A549 (cell line): ENCODE measurements at regions of chr15 and their contacts with region 1.

Region 1: DNA sequence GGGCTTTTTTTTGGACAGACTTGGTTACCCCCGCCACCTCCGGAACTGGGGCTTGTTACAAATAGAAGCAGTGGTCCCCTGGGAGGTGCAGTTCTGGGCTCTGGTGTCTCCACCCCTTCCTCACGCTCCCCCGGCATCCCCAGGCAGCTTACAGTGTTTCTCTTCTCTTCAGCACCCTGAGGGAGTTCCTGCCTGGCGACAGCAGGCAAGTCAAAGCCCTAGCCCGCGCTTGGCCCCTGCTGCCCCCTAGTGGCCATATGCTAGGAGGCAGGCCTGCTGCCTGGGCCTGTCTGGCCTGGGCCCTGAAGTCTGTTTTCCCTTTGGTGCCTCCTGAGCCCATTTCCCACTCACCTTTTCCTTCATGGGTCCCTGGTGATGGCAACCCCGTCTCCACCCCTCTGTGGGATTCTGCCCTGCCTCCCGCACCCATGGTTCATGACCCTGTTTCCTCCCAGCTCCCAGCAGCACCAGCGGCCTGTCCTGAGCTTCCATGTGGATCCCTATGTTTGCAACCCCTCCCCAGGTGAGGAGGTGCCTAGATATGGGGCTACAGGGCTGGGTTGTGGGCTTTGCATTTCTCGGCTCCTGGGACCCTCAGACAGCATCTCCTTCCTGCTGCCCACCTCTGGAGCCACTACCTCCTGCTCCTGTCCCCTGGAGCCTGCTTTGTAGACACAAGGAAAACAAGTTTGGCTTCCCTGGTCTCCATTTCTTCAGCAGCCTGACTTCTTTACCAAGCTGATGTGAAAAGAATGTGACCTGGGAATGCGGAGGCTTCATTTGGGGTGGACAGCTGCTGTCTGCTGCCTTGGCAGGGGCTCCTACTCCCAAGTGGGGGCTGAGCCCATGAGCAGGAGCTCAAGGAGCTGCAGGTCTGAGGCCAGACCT is 2.2 kb downstream of the SNX22 start:
- DNase-seq: peak; percentile 90 to 98
- ATAC-seq: peak; percentile 65 to 88
- H3K4me3 ChIP-seq: no peak overlapping the region
- H3K27ac ChIP-seq: peak overlapping the region in 1 of 2 experiments; percentile 63; a peak in 3 of 6 replicates
- H3K4me1 ChIP-seq: peaks cover 9% of the 10 kb centered on the region; the same call in 1 of the 3 replicates
- CTCF ChIP-seq: peak; percentile 97
- EP300 ChIP-seq: no peak
- POLR2A ChIP-seq: peak; percentile 38; the same call in 1 of the 2 replicates
- RAD21 ChIP-seq: peak; percentile 81 to 87

Region 2: DNA sequence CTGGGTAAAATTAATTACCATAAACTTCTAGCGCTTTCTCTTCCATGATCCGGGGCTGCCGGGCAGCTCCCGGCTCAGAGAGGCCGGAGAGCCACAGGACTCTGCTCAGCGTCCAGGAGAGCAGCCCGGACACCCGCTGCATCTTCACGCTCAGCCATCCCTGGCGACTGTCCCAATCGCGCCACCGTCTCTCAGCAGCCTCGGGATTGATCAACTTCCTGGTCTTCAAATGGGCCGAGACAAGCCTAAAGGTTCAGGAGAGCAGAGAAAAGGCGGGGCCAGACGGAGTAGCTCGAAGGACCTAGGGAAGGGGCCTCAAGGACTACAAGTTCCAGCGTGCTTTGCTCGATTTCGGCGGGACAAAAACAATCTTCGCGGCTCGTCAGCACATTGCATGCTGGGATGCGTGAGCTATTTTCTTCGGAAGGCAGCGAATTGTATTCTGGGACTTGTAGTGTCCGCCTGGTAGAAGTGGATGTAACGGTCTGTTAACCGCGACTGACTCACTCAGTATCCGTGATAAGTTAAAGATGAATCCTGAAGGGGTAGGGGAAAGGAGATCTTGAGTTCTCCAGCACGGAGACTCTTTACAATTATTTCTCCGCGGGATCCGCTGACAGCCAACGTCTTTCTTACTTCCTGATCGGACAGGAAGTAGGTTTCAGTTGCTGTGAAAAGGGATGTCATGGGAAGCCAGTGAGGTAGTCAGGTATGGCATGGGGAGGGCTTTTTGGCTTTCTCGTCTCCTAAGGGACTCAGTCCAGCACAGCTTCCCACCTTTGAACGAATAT is 59.9 kb before region 1 on chr15 and contains the start of gene CIAO2A:
- CTCF ChIA-PET with region 1: interaction called, 27 read pairs
- POLR2A ChIA-PET with region 1: interaction called, 3 read pairs
- DNase-seq: peak; percentile 96 to 100
- ATAC-seq: peak; percentile 82 to 90
- H3K4me3 ChIP-seq: peak within 1 kb of the TSS; percentile 68
- H3K27ac ChIP-seq: peak within 1 kb of the TSS; percentile 85 to 86
- H3K4me1 ChIP-seq: peaks cover 32% of the 10 kb centered on the region
- CTCF ChIP-seq: no peak
- EP300 ChIP-seq: no peak
- POLR2A ChIP-seq: peak; percentile 82
- RAD21 ChIP-seq: no peak
- polyA plus RNA-seq, gene CIAO2A: 149 and 231 TPM in 2 replicates

Region 3: GRCh38 chr15:64122444-64122843 is 31.3 kb before region 1 on chr15:
- CTCF ChIA-PET with region 1: interaction called, 21 read pairs
- POLR2A ChIA-PET with region 1: no interaction called
- DNase-seq: no peak
- ATAC-seq: no peak
- H3K4me3 ChIP-seq: no peak overlapping the region
- H3K27ac ChIP-seq: no peak overlapping the region
- H3K4me1 ChIP-seq: no peaks in the 10 kb centered on the region
- CTCF ChIP-seq: no peak
- EP300 ChIP-seq: no peak
- POLR2A ChIP-seq: no peak
- RAD21 ChIP-seq: no peak

Region 4: DNA sequence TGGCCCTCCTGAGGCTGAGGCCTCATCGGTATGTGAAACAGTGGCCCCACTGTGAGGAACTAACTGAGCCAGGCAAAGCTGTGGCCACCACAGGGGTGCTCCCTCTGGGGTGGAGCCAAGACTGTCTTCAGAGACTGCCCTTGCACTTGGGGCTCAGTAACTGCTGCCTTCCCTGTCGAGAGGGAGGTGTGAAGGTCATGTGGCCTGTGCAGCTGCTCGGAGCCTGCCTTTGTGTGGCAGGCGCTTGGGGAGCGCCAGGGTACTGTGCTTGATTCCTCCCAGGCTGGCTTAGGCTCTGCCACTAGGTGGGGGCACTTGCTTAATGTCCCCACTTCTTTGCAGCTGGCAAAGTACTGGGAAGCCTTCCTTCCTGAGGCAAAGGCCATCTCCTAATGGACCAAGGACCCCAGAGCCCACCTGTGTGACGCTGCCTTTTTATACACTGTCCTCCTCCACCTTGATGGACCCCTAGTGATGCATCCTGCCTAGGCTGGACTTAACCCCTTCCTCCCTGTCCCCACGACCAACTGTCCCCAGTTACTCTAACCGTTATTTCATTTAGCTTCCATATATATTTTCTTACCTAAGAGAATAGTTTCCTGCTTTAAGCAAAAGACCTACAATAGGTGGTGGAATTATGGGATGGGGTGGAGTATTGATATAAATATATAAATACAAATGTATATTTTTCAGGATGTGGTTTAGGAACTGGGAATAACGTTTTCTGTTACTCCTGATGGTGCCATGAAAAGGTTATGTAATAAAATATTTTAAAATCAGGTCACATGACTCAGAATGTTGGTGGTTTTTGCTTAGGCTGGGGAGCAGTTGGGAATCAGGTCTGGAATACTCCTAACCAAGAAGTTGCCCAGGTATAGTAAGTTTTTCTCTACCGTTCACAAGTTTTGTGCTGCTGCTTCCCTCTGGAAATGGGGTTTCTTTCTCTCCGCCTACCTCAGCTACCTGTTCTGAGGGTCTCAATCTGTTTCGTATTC is 16.2 kb before region 1 on chr15:
- CTCF ChIA-PET with region 1: interaction called, 65 read pairs
- POLR2A ChIA-PET with region 1: no interaction called
- DNase-seq: no peak
- ATAC-seq: peak; percentile 49 to 66; a peak in 5 of 6 replicates
- H3K4me3 ChIP-seq: no peak overlapping the region
- H3K27ac ChIP-seq: no peak overlapping the region
- H3K4me1 ChIP-seq: no peaks in the 10 kb centered on the region
- CTCF ChIP-seq: no peak
- EP300 ChIP-seq: no peak
- POLR2A ChIP-seq: no peak
- RAD21 ChIP-seq: no peak